Mammary epithelial cell (primary cell): ENCODE measurements at regions of chr6 and their contacts with region 1.

Region 1: DNA sequence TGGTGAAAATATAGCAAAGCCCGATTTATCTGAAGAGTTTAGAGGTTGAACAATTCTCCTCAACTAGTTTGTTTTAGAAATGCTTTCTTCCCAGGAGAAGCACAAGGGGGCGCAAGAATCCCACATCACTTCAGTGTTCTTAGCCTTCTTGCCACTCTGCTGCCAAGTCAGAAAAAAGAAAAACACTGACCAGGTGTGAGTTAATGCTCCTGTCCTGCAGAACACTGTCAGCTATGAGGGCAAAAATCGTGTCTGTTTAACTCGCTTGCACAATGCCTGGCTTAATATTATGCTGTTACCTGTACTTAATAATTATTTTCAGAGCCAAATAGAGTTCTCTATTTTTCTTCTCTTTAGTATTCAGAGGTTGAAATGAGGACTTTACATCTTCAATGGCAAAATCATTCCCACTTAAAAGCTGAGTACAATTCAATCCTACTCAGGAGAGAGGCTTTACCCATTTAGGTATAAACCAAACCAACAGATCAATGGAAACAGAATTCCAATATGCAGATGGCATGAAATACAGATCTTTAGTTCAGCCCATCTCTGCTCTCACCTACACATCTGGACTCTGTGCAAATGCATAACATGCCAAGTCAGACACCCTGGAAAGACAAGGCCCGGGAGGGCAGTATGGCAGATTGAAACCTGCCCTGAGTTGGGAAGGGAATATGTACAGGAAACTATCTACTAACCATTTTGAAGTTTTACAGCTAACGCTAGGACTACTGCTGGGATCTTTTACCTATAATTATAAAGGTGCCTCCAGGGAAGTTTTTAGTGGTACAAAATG is 71.4 kb upstream of the TULP1 start:
- DNase-seq: peak; percentile 65
- H3K4me3 ChIP-seq: no peak overlapping the region
- H3K27ac ChIP-seq: peak overlapping the region; percentile 60
- H3K4me1 ChIP-seq: peaks cover 39% of the 10 kb centered on the region
- H3K27me3 ChIP-seq: no peaks in the 10 kb centered on the region
- CTCF ChIP-seq: peak; percentile 75 to 81

Region 2: GRCh38 chr6:35601331-35602132 is 17.4 kb after region 1 on chr6:
- CTCF ChIA-PET with region 1: no interaction called
- dilution Hi-C with region 1: no loop called
- in situ Hi-C with region 1: no loop called
- intact Hi-C with region 1: loop called (anchors 2 kb)
- DNase-seq: peak; percentile 84
- H3K4me3 ChIP-seq: peak overlapping the region in 2 of 3 experiments; percentile 39 to 41
- H3K27ac ChIP-seq: peak overlapping the region; percentile 96
- H3K4me1 ChIP-seq: peaks cover 67% of the 10 kb centered on the region
- H3K27me3 ChIP-seq: no peaks in the 10 kb centered on the region
- CTCF ChIP-seq: no peak

Region 3: GRCh38 chr6:35624341-35625070 is 40.4 kb after region 1 on chr6:
- CTCF ChIA-PET with region 1: no interaction called
- dilution Hi-C with region 1: no loop called
- in situ Hi-C with region 1: no loop called
- intact Hi-C with region 1: loop called (anchors 1 kb)
- DNase-seq: no peak
- H3K4me3 ChIP-seq: no peak overlapping the region
- H3K27ac ChIP-seq: no peak overlapping the region
- H3K4me1 ChIP-seq: no peaks in the 10 kb centered on the region
- H3K27me3 ChIP-seq: no peaks in the 10 kb centered on the region
- CTCF ChIP-seq: peak; percentile 8 to 22

Region 4: GRCh38 chr6:35688581-35689322 is 104.7 kb after region 1 on chr6 and contains the start of gene FKBP5:
- CTCF ChIA-PET with region 1: no interaction called
- dilution Hi-C with region 1: no loop called
- in situ Hi-C with region 1: no loop called
- intact Hi-C with region 1: loop called (anchors 2 kb)
- DNase-seq: peak; percentile 89
- H3K4me3 ChIP-seq: peak within 1 kb of the TSS; percentile 65 to 94 (median 92)
- H3K27ac ChIP-seq: peak within 1 kb of the TSS; percentile 91
- H3K4me1 ChIP-seq: peaks cover 9% of the 10 kb centered on the region
- H3K27me3 ChIP-seq: no peaks in the 10 kb centered on the region
- CTCF ChIP-seq: no peak
- total RNA-seq, gene FKBP5: 60.7 to 97.9 TPM

Region 5: GRCh38 chr6:35955976-35956375 is 371.9 kb after region 1 on chr6:
- CTCF ChIA-PET with region 1: no interaction called
- dilution Hi-C with region 1: no loop called
- in situ Hi-C with region 1: no loop called
- intact Hi-C with region 1: loop called (anchors 5 kb)
- DNase-seq: no peak
- H3K4me3 ChIP-seq: no peak overlapping the region
- H3K27ac ChIP-seq: no peak overlapping the region
- H3K4me1 ChIP-seq: peaks cover 25% of the 10 kb centered on the region
- H3K27me3 ChIP-seq: no peaks in the 10 kb centered on the region
- CTCF ChIP-seq: peak; percentile 7 to 41